Left ventricle myocardium superior (tissue), 1 donor: ENCODE measurements at regions of chr11 and their contacts with region 1.

Region 1: GRCh38 chr11:73177778-73178577 is 35.9 kb upstream of the FCHSD2 start:
- DNase-seq: peak; percentile 89
- ATAC-seq: peak; percentile 62

Region 2: GRCh38 chr11:72831513-72832300 is 346.3 kb before region 1 on chr11:
- intact Hi-C with region 1: loop called (anchors 5 kb)
- DNase-seq: peak; percentile 90
- ATAC-seq: peak; percentile 75

Region 3: GRCh38 chr11:72924568-72925190 is 253.3 kb before region 1 on chr11:
- intact Hi-C with region 1: loop called (anchors 10 kb)
- DNase-seq: no peak
- ATAC-seq: peak; percentile 64